CD4-positive, alpha-beta memory T cell (primary cell): ENCODE measurements at regions of chr11 and their contacts with region 1.

Region 1: GRCh38 chr11:63478896-63479295 is 12.1 kb downstream of the PLAAT5 start:
- DNase-seq: peak; percentile 63 to 72 (median 67)
- H3K4me3 ChIP-seq: no peak overlapping the region
- H3K4me3 Mint-ChIP-seq: no peak overlapping the region
- H3K27ac ChIP-seq: no peak overlapping the region
- H3K27ac Mint-ChIP-seq: no peak overlapping the region
- H3K4me1 ChIP-seq: no peaks in the 10 kb centered on the region
- H3K4me1 Mint-ChIP-seq: no peaks in the 10 kb centered on the region
- H3K27me3 ChIP-seq: no peaks in the 10 kb centered on the region
- H3K27me3 Mint-ChIP-seq: peaks cover 2 to 6% of the 10 kb centered on the region in 2 donors

Region 2: GRCh38 chr11:63032457-63032856 is 446.4 kb before region 1 on chr11:
- CTCF ChIA-PET with region 1: no interaction called
- POLR2A ChIA-PET with region 1: no interaction called
- intact Hi-C with region 1: loop called (anchors 10 kb)
- DNase-seq: no peak
- H3K4me3 ChIP-seq: no peak overlapping the region
- H3K4me3 Mint-ChIP-seq: no peak overlapping the region
- H3K27ac ChIP-seq: no peak overlapping the region
- H3K27ac Mint-ChIP-seq: no peak overlapping the region
- H3K4me1 ChIP-seq: no peaks in the 10 kb centered on the region
- H3K4me1 Mint-ChIP-seq: peaks cover 0 to 5% (median 3%) of the 10 kb centered on the region in 4 donors
- H3K27me3 ChIP-seq: no peaks in the 10 kb centered on the region
- H3K27me3 Mint-ChIP-seq: peaks cover 12 to 42% of the 10 kb centered on the region in 2 donors

Region 3: DNA sequence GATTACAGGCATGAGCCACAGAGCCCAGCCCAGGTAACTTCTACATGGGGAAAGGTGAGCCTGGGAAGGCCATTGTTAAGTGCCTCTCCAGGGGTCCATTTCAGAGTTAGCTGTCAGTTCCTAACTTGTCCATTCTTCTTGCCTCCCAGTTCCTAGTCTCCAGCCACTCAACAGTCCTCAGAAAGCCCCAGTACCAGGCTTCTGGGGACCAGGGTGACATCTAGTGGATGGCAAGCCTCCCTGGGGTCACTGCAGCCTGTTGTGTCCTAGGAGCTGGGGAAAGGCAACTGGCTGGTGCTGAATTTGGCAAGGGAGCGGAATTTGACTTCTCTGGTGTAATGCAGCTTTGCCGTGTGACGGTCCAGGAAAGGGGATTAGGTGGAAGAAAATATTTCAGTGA is 29.1 kb after region 1 on chr11:
- CTCF ChIA-PET with region 1: interaction called, 24 read pairs
- POLR2A ChIA-PET with region 1: no interaction called
- intact Hi-C with region 1: no loop called
- DNase-seq: no peak
- H3K4me3 ChIP-seq: no peak overlapping the region
- H3K4me3 Mint-ChIP-seq: no peak overlapping the region
- H3K27ac ChIP-seq: no peak overlapping the region
- H3K27ac Mint-ChIP-seq: no peak overlapping the region
- H3K4me1 ChIP-seq: peaks cover 13% of the 10 kb centered on the region
- H3K4me1 Mint-ChIP-seq: peaks cover 2 to 8% (median 3%) of the 10 kb centered on the region in 4 donors
- H3K27me3 ChIP-seq: no peaks in the 10 kb centered on the region
- H3K27me3 Mint-ChIP-seq: no peaks in the 10 kb centered on the region

Region 4: DNA sequence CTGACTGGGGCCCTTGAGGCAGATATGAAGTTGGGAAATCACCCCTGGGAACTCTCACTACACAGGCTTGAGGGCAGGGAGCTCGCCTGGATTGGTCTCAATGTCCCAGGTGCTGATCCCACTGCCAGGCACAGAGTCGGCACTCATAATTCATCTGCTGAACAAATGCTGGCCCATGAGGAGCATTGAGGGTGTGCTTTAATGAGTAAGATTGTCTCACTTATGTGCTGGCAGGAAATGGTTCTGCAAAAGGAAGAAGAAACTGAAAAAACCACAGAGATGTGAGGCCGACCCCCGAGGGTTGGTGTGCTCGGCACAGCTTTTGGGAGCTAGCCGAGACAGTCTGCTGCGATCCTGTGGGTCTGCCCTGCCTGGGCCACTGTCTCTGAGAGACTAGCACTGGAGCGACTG is 74.8 kb after region 1 on chr11:
- CTCF ChIA-PET with region 1: interaction called, 10 read pairs
- POLR2A ChIA-PET with region 1: interaction called, 3 read pairs
- intact Hi-C with region 1: no loop called
- DNase-seq: peak; percentile 38 to 77 (median 52)
- H3K4me3 ChIP-seq: peak overlapping the region in 1 of 2 donors; percentile 53
- H3K4me3 Mint-ChIP-seq: peak overlapping the region; percentile 57 to 94 (median 89)
- H3K27ac ChIP-seq: peak overlapping the region; percentile 62
- H3K27ac Mint-ChIP-seq: peak overlapping the region; percentile 84 to 98 (median 95)
- H3K4me1 ChIP-seq: peaks cover 38% of the 10 kb centered on the region
- H3K4me1 Mint-ChIP-seq: peaks cover 37 to 56% (median 45%) of the 10 kb centered on the region in 4 donors
- H3K27me3 ChIP-seq: no peaks in the 10 kb centered on the region
- H3K27me3 Mint-ChIP-seq: no peaks in the 10 kb centered on the region

Region 5: DNA sequence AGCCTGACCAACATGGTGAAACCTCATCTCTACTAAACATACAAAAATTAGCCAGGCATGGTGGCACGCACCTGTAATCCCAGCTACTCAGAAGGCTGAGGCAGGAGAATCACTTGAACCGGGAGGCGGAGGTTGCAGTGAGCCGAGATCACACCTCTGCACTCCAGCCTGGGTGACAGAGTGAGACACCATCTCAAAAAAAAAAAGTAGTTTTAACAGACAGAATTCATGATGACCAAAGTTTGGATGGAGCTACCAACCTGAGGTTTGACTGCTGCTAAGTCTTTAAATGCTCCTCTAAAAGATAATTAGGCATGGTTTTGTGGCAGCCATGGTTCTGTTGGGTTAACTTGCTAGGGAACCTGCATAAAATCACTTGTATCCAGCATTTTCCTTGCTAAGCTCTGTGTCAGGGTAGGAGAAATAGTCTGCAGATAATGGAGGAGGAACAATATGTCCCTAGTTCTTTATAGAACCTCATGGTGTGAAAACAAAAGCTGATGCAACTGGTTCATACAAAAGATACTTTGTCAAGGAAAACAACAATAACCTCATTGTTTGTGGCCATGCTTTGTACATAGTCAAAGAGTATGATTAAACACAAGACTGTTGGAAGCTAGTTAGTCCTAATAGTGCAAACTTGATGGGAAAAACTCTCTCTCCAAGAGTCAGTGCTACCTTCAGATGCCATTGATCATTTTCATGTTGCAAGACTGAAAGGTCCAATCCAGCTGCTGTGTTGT is 104.2 kb after region 1 on chr11:
- CTCF ChIA-PET with region 1: no interaction called
- POLR2A ChIA-PET with region 1: no interaction called
- intact Hi-C with region 1: no loop called
- DNase-seq: no peak
- H3K4me3 ChIP-seq: no peak overlapping the region
- H3K4me3 Mint-ChIP-seq: no peak overlapping the region
- H3K27ac ChIP-seq: no peak overlapping the region
- H3K27ac Mint-ChIP-seq: peak overlapping the region in 4 of 7 donors; percentile 52 to 89 (median 80)
- H3K4me1 ChIP-seq: peaks cover 9% of the 10 kb centered on the region
- H3K4me1 Mint-ChIP-seq: peaks cover 11 to 12% (median 11%) of the 10 kb centered on the region in 4 donors
- H3K27me3 ChIP-seq: no peaks in the 10 kb centered on the region
- H3K27me3 Mint-ChIP-seq: no peaks in the 10 kb centered on the region

Region 6: GRCh38 chr11:63621931-63622782 is 143.3 kb after region 1 on chr11:
- CTCF ChIA-PET with region 1: interaction called, 10 read pairs
- POLR2A ChIA-PET with region 1: no interaction called
- intact Hi-C with region 1: no loop called
- DNase-seq: no peak
- H3K4me3 ChIP-seq: no peak overlapping the region
- H3K4me3 Mint-ChIP-seq: no peak overlapping the region
- H3K27ac ChIP-seq: no peak overlapping the region
- H3K27ac Mint-ChIP-seq: peak overlapping the region in 1 of 7 donors; percentile 16
- H3K4me1 ChIP-seq: no peaks in the 10 kb centered on the region
- H3K4me1 Mint-ChIP-seq: peaks cover 0 to 3% (median under 1%) of the 10 kb centered on the region in 4 donors
- H3K27me3 ChIP-seq: no peaks in the 10 kb centered on the region
- H3K27me3 Mint-ChIP-seq: no peaks in the 10 kb centered on the region

Region 7: GRCh38 chr11:63635762-63636465 is 157.0 kb after region 1 on chr11:
- CTCF ChIA-PET with region 1: interaction called, 191 read pairs
- POLR2A ChIA-PET with region 1: interaction called, 8 read pairs
- intact Hi-C with region 1: loop called (anchors 1 kb)
- DNase-seq: peak; percentile 56 to 69 (median 66)
- H3K4me3 ChIP-seq: no peak overlapping the region
- H3K4me3 Mint-ChIP-seq: no peak overlapping the region
- H3K27ac ChIP-seq: no peak overlapping the region
- H3K27ac Mint-ChIP-seq: peak overlapping the region in 1 of 7 donors; percentile 7
- H3K4me1 ChIP-seq: no peaks in the 10 kb centered on the region
- H3K4me1 Mint-ChIP-seq: peaks cover 10 to 14% (median 10%) of the 10 kb centered on the region in 4 donors
- H3K27me3 ChIP-seq: no peaks in the 10 kb centered on the region
- H3K27me3 Mint-ChIP-seq: no peaks in the 10 kb centered on the region

Region 8: DNA sequence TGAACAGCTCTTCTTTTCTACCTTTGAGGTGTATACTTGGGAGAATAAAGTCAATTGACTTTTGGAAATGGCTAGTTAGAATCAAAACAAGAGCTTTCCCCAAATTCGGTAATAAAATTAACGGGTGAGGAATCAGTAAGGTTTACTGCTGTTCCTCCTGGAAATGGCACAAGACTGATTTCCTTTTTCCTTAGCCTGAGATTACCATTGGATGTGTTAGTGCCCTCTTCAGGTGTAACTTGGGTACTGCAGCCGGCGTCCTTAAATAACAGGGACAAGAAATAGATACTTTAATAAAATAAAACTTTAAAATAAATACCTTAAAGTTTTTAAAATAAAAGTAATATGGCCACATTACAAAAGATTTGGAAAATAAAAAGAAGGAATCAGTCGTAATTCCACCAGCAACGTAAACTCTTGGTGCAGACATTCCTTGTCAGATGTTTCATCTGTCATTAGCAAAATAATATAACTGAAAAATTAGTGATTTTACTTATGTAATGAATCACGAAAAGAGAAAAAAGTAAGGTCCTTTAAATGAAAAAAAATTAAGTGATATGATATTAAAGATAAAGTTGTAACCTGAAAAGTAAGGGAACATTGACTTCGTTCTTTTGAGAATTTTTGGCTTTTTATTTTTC is 259.9 kb after region 1 on chr11:
- CTCF ChIA-PET with region 1: interaction called, 41 read pairs
- POLR2A ChIA-PET with region 1: no interaction called
- intact Hi-C with region 1: loop called (anchors 1 kb)
- DNase-seq: peak; percentile 27 to 65 (median 50)
- H3K4me3 ChIP-seq: no peak overlapping the region
- H3K4me3 Mint-ChIP-seq: no peak overlapping the region
- H3K27ac ChIP-seq: no peak overlapping the region
- H3K27ac Mint-ChIP-seq: peak overlapping the region in 2 of 7 donors; percentile 53 to 85
- H3K4me1 ChIP-seq: no peaks in the 10 kb centered on the region
- H3K4me1 Mint-ChIP-seq: peaks cover 2 to 4% (median 4%) of the 10 kb centered on the region in 4 donors
- H3K27me3 ChIP-seq: no peaks in the 10 kb centered on the region
- H3K27me3 Mint-ChIP-seq: no peaks in the 10 kb centered on the region